Natural killer cell (primary cell): ENCODE measurements at regions of chr19 and their contacts with region 1.

Region 1: DNA sequence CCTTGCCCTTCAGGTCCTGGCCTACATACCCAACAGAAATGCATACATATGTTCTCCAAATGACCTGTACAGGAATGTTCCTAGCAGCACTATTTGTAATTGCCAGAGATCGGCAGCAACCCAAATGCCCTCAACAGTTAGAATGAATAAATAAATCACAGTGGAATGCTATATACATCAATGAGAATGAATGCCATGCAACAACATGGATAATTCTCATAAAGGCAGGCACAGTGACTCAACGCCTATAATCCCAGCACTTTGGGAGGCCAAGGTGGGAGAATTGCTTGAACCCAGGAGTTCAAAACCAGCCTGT is 18.6 kb downstream of the TEX101 start:
- DNase-seq: no peak
- ATAC-seq: no peak
- H3K4me3 ChIP-seq: no peak overlapping the region
- H3K4me3 Mint-ChIP-seq: no peak overlapping the region
- H3K27ac ChIP-seq: no peak overlapping the region
- H3K27ac Mint-ChIP-seq: peak overlapping the region in 1 of 2 donors; percentile 29
- H3K4me1 ChIP-seq: peaks cover 11% of the 10 kb centered on the region
- H3K4me1 Mint-ChIP-seq: peaks cover 18 to 20% of the 10 kb centered on the region in 2 donors
- H3K27me3 ChIP-seq: no peaks in the 10 kb centered on the region
- H3K27me3 Mint-ChIP-seq: no peaks in the 10 kb centered on the region
- CTCF ChIP-seq: no peak

Region 2: GRCh38 chr19:43519436-43520088 is 86.2 kb after region 1 on chr19:
- intact Hi-C with region 1: loop called (anchors 1 kb)
- DNase-seq: peak; percentile 70 to 93
- ATAC-seq: peak; percentile 69 to 84 (median 76)
- H3K4me3 ChIP-seq: no peak overlapping the region
- H3K4me3 Mint-ChIP-seq: no peak overlapping the region
- H3K27ac ChIP-seq: no peak overlapping the region
- H3K27ac Mint-ChIP-seq: peak overlapping the region in 1 of 2 donors; percentile 13
- H3K4me1 ChIP-seq: peaks cover 2% of the 10 kb centered on the region
- H3K4me1 Mint-ChIP-seq: peaks cover 9% of the 10 kb centered on the region in 2 donors
- H3K27me3 ChIP-seq: no peaks in the 10 kb centered on the region
- H3K27me3 Mint-ChIP-seq: no peaks in the 10 kb centered on the region
- CTCF ChIP-seq: peak; percentile 88

Region 3: DNA sequence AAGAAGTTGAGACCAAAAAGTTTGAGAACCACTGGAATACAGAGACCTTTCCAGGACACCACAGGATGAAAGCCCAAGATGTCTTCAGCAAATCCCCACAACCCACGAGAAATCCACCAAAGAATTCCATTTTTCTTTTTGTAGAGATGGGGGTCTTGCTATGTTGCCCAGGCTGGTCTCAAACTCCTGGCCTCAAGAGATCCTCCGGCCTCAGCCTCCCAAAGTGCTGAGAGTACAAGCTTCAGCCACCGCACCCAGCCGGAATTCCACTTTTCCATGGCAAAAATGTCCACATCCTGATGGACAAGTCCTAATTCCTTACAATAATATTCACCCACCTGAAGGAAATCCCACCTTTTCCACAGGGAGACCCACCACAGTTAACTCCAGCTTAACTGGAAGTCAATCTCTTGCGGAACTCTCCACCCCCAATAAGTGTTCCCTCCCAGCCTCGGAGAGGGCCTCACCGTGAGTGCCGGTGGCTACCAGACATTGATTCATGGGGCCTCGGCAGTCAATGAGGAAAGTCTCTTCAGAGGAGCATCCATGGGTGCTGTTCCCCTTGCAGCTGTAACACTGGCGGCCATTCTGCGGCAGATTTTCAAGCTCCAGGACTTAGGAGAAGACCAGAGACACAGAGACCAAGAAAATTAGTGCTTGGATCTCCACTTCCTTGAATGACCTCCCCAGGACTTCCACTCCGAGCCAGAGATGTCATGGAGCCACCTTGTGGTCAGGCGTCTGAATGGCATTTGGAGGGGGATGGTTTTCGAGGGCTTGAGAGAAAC is 218.6 kb after region 1 on chr19:
- intact Hi-C with region 1: loop called (anchors 1 kb)
- DNase-seq: peak; percentile 25 to 71
- ATAC-seq: peak in 2 of 3 donors; percentile 65 to 70
- H3K4me3 ChIP-seq: no peak overlapping the region
- H3K4me3 Mint-ChIP-seq: no peak overlapping the region
- H3K27ac ChIP-seq: no peak overlapping the region
- H3K27ac Mint-ChIP-seq: no peak overlapping the region
- H3K4me1 ChIP-seq: no peaks in the 10 kb centered on the region
- H3K4me1 Mint-ChIP-seq: no peaks in the 10 kb centered on the region
- H3K27me3 ChIP-seq: no peaks in the 10 kb centered on the region
- H3K27me3 Mint-ChIP-seq: no peaks in the 10 kb centered on the region
- CTCF ChIP-seq: peak; percentile 36

Region 4: DNA sequence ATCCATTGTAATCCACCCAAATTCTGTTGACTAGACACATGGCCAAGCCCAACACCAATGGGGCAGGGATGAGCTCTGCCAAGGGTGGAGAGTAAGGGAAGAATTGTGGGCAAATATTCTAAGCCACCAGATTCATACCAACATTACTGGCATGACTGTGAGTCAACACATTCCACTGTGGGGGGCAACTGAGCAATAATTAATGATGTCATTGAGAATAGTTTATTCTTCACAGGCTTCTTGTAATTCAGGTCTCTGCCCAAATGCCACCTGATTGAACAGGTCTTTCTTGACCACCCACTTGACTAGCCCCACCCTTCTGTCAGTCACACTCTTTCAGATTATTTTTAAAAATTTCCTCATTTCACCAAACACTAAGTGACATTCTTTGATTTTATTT is 422.3 kb after region 1 on chr19:
- intact Hi-C with region 1: no loop called
- DNase-seq: no peak
- ATAC-seq: no peak
- H3K4me3 ChIP-seq: no peak overlapping the region
- H3K4me3 Mint-ChIP-seq: no peak overlapping the region
- H3K27ac ChIP-seq: no peak overlapping the region
- H3K27ac Mint-ChIP-seq: no peak overlapping the region
- H3K4me1 ChIP-seq: no peaks in the 10 kb centered on the region
- H3K4me1 Mint-ChIP-seq: no peaks in the 10 kb centered on the region
- H3K27me3 ChIP-seq: no peaks in the 10 kb centered on the region
- H3K27me3 Mint-ChIP-seq: no peaks in the 10 kb centered on the region
- CTCF ChIP-seq: no peak